Endothelial cell of umbilical vein (primary cell): ENCODE measurements at regions of chr11 and their contacts with region 1.

Region 1: GRCh38 chr11:126480410-126481302 is 125.2 kb downstream of the ST3GAL4 start:
- DNase-seq: peak; percentile 76
- H3K4me3 ChIP-seq: no peak overlapping the region
- H3K27ac ChIP-seq: no peak overlapping the region
- H3K4me1 ChIP-seq: no peaks in the 10 kb centered on the region
- H3K27me3 ChIP-seq: peaks cover 0 to 2% of the 10 kb centered on the region in 2 experiments
- CTCF ChIP-seq: peak; percentile 87 to 95
- POLR2A ChIP-seq: no peak

Region 2: DNA sequence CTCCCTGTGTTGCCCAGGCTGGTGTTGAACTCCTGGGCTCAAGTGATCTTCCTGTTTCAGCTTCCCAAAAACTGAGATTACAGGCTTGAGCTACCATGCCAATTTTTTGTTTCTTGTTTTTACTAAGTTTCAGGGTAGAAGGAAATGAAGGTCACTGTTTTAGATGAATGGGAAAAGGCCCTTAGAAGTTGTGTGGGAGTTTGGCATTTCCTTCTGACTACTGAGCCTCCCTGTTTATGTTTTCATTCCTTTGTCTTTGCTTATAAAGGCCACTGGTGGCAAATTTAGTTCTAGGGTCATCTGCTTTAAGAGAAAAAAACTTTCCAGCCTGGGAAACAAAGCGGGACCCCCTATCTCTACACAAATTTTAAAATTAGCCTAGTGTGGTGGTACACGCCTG is 234.0 kb before region 1 on chr11:
- CTCF ChIA-PET with region 1: no interaction called
- POLR2A ChIA-PET with region 1: no interaction called
- dilution Hi-C with region 1: no loop called
- intact Hi-C with region 1: no loop called
- DNase-seq: peak; percentile 92
- H3K4me3 ChIP-seq: no peak overlapping the region
- H3K27ac ChIP-seq: peak overlapping the region; percentile 73
- H3K4me1 ChIP-seq: peaks cover 13% of the 10 kb centered on the region
- H3K27me3 ChIP-seq: no peaks in the 10 kb centered on the region
- CTCF ChIP-seq: no peak
- POLR2A ChIP-seq: no peak

Region 3: DNA sequence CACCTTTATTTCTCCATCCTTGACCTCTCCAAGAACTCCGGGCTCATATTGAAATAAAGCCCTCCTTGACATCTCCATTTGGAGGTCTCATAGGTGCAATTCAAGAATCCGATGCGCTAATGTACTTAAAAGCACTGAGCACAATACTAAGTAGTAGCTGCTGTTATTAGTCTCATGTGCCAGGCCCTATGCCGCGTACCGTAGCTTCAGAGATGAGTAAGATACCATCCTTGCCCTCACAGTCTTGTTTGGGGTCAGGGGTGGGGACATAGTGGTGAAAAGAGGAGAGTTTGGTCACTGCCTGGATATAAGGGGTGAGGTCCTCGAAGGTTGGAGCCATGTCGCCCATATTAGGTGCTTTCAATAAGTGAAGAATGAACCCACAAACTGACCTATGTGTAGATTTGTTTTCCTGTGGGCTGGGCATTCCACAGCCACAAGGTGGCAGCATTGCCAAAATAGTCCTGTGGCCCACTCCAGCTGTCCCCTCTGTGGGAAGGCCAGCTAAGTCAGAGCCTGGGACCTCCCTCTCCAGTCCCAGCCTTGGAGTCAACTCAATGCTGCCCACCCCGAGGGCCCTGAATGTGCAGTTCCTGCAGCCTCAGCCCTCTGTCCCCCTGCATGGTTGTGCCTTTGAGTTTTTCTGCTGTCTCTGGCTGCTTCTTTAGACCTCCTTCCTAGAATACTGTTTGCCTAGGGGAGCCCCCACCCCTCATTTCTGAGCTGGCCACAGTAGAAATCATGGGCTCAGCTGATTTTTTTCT is 170.2 kb before region 1 on chr11:
- CTCF ChIA-PET with region 1: interaction called, 437 read pairs
- POLR2A ChIA-PET with region 1: interaction called, 4 read pairs
- dilution Hi-C with region 1: no loop called
- intact Hi-C with region 1: loop called (anchors 1 kb)
- DNase-seq: peak; percentile 78
- H3K4me3 ChIP-seq: no peak overlapping the region
- H3K27ac ChIP-seq: no peak overlapping the region
- H3K4me1 ChIP-seq: no peaks in the 10 kb centered on the region
- H3K27me3 ChIP-seq: no peaks in the 10 kb centered on the region
- CTCF ChIP-seq: peak; percentile 89 to 91
- POLR2A ChIP-seq: no peak

Region 4: DNA sequence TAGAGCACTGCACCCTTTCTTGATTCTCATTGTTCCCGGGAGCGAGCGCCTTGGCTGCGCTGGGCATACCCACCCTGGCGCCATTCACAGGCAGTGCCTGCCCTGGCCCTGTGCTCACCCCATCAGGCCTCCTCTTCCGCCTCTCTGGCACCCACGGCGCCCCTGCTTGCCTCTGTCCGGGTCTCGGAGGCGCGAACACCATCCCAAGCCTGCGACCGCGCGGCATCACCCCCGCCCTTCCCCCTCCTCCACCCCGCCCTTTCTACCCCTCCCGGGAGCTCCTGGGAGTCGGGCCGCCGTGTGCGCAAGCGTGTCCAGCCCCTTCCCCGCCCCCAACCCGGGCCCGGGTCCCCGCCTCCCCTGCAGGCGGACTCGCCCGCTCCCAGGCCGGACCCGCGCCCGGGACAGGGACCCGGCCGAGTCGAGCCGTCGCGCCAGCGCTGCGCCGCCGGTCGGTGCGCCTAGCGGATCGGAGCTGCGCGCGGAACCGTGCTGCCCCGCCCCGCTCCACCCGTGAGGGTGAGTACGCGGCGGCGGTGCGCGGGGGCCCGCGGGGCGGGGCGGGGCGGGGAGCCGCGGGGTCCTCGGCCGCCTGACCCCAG is 125.2 kb before region 1 on chr11 and contains the start of gene ST3GAL4:
- CTCF ChIA-PET with region 1: interaction called, 34 read pairs
- POLR2A ChIA-PET with region 1: no interaction called
- dilution Hi-C with region 1: no loop called
- intact Hi-C with region 1: no loop called
- DNase-seq: peak; percentile 73
- H3K4me3 ChIP-seq: peak within 1 kb of the TSS; percentile 16 to 69 (median 64)
- H3K27ac ChIP-seq: peak within 1 kb of the TSS; percentile 79
- H3K4me1 ChIP-seq: peaks cover 23% of the 10 kb centered on the region
- H3K27me3 ChIP-seq: no peaks in the 10 kb centered on the region
- CTCF ChIP-seq: no peak
- POLR2A ChIP-seq: peak; percentile 82
- total RNA-seq, gene ST3GAL4: 17.7 and 21.1 TPM in 2 replicates

Region 5: DNA sequence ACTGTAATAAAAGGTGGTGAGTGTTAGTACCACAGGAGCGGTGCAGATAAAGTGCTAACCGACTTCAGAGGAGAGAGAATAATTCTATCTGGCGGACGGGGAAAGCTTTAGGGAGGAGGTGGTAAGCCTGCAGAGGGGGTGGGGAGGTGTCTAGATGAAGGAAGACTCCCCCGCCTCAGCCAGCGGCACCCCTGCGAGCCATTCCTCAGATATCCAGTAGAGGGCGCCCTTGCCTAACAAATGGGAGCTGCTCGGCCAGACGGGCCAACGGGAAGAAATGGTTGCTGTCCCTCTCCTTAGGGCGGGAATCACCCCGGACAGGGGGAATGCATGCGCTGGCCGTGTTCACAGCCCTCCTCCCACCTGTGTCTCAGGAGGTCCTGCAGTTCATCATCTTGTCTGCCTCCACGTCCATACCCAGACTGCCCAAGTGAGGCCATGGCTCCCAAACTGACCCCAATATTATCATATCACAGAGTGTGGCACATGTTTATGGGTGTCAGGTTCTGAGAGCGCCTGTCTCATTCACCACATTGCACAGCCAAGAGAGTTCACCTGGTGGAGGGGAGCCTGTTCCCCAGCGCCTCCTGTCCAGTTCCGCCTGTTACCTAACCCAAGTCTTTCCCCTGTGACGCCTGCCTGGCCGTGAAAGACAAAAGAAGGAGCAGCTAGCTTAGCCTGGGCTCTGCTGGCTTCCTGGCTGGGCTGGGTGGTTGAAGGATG is 39.7 kb before region 1 on chr11:
- CTCF ChIA-PET with region 1: interaction called, 231 read pairs
- POLR2A ChIA-PET with region 1: no interaction called
- dilution Hi-C with region 1: no loop called
- intact Hi-C with region 1: loop called (anchors 1 kb)
- DNase-seq: peak; percentile 74
- H3K4me3 ChIP-seq: no peak overlapping the region
- H3K27ac ChIP-seq: no peak overlapping the region
- H3K4me1 ChIP-seq: no peaks in the 10 kb centered on the region
- H3K27me3 ChIP-seq: no peaks in the 10 kb centered on the region
- CTCF ChIP-seq: peak; percentile 84 to 88
- POLR2A ChIP-seq: no peak

Region 6: GRCh38 chr11:126502159-126502558 is 21.5 kb after region 1 on chr11:
- CTCF ChIA-PET with region 1: interaction called, 14 read pairs
- POLR2A ChIA-PET with region 1: no interaction called
- dilution Hi-C with region 1: no loop called
- intact Hi-C with region 1: no loop called
- DNase-seq: no peak
- H3K4me3 ChIP-seq: no peak overlapping the region
- H3K27ac ChIP-seq: no peak overlapping the region
- H3K4me1 ChIP-seq: no peaks in the 10 kb centered on the region
- H3K27me3 ChIP-seq: no peaks in the 10 kb centered on the region
- CTCF ChIP-seq: no peak
- POLR2A ChIP-seq: no peak